ENCODE measurements at regions of chr9 and their contacts with region 1.

Region 1: GRCh38 chr9:88559661-88560060 is 24.7 kb downstream of the NXNL2 start:
- DNase-seq: no peak
- ATAC-seq: no peak
- H3K4me3 ChIP-seq: no peak overlapping the region
- H3K4me3 Mint-ChIP-seq: no peak overlapping the region
- H3K27ac ChIP-seq: no peak overlapping the region
- H3K27ac Mint-ChIP-seq: no peak overlapping the region
- H3K4me1 ChIP-seq: no peaks in the 10 kb centered on the region
- H3K4me1 Mint-ChIP-seq: no peaks in the 10 kb centered on the region
- H3K27me3 ChIP-seq: peaks cover 0 to 12% of the 10 kb centered on the region in 2 experiments
- H3K27me3 Mint-ChIP-seq: peaks cover 3 to 10% of the 10 kb centered on the region in 2 donors

Region 2: DNA sequence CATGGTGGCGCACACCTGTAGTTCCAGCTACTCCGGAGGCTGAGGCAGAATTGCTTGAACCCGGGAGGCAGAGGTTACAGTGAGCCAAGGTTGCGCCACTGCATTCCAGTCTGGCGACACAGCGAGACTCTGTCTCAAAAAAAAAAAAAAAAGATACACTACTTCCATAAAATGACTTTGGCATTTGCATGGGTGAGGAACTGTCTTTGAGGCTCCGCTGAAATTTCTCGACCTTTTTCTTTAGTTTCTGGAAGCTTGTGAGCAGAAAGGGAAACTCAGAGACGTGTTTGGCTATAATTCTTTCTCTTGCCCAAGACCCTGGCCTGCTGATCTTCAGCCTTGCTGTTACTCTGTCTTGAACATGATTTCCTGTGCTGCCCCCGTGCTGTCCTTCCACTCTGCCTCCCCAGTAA is 134.1 kb before region 1 on chr9:
- CTCF ChIA-PET with region 1: no interaction called
- POLR2A ChIA-PET with region 1: no interaction called
- DNase-seq: no peak
- ATAC-seq: no peak
- H3K4me3 ChIP-seq: no peak overlapping the region
- H3K4me3 Mint-ChIP-seq: no peak overlapping the region
- H3K27ac ChIP-seq: no peak overlapping the region
- H3K27ac Mint-ChIP-seq: no peak overlapping the region
- H3K4me1 ChIP-seq: no peaks in the 10 kb centered on the region
- H3K4me1 Mint-ChIP-seq: peaks cover 13 to 27% (median 22%) of the 10 kb centered on the region in 3 donors
- H3K27me3 ChIP-seq: no peaks in the 10 kb centered on the region
- H3K27me3 Mint-ChIP-seq: no peaks in the 10 kb centered on the region

Region 3: GRCh38 chr9:88578121-88579054 is 18.7 kb after region 1 on chr9:
- CTCF ChIA-PET with region 1: no interaction called
- POLR2A ChIA-PET with region 1: interaction called in 1 of 2 experiments, 11 read pairs
- DNase-seq: peak in 33 of 35 experiments; percentile 13 to 72 (median 50)
- ATAC-seq: peak in 3 of 4 experiments; percentile 64 to 68 (median 67)
- H3K4me3 ChIP-seq: no peak overlapping the region
- H3K4me3 Mint-ChIP-seq: peak overlapping the region in 1 of 3 donors; percentile 51
- H3K27ac ChIP-seq: no peak overlapping the region
- H3K27ac Mint-ChIP-seq: no peak overlapping the region
- H3K4me1 ChIP-seq: peaks cover 0 to 8% of the 10 kb centered on the region in 2 experiments
- H3K4me1 Mint-ChIP-seq: peaks cover 1 to 3% (median 3%) of the 10 kb centered on the region in 3 donors
- H3K27me3 ChIP-seq: peaks cover 0 to 38% of the 10 kb centered on the region in 2 experiments
- H3K27me3 Mint-ChIP-seq: peaks cover 8 to 17% of the 10 kb centered on the region in 2 donors

Region 4: DNA sequence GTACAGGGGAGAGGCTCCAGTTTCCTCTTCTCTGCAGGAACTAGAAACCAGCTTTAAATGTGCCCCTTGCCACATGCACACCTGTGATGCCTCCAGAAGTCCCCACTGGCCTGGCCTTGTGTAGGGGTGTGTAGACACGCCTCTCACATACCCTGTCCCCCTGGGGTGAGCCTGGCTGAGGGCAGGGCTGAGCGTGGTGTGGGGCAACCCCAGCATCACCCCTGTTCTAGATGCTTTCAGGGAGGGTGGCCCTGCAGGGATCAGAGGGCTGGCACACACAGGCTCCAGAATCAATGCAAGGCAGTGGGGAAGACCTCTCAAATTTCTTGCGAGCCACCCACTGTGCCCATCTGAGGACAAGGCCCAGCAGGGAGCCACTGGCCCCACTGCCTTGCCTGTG is 30.0 kb after region 1 on chr9:
- CTCF ChIA-PET with region 1: no interaction called
- POLR2A ChIA-PET with region 1: no interaction called
- DNase-seq: no peak
- ATAC-seq: no peak
- H3K4me3 ChIP-seq: no peak overlapping the region
- H3K4me3 Mint-ChIP-seq: no peak overlapping the region
- H3K27ac ChIP-seq: no peak overlapping the region
- H3K27ac Mint-ChIP-seq: no peak overlapping the region
- H3K4me1 ChIP-seq: peaks cover 0 to 2% of the 10 kb centered on the region in 2 experiments
- H3K4me1 Mint-ChIP-seq: peaks cover 4 to 8% (median 4%) of the 10 kb centered on the region in 3 donors
- H3K27me3 ChIP-seq: peaks cover 0 to 7% of the 10 kb centered on the region in 2 experiments
- H3K27me3 Mint-ChIP-seq: peaks cover 0 to 4% of the 10 kb centered on the region in 2 donors

Region 5: GRCh38 chr9:88803546-88804253 is 244.0 kb after region 1 on chr9:
- CTCF ChIA-PET with region 1: no interaction called
- POLR2A ChIA-PET with region 1: no interaction called
- DNase-seq: no peak
- ATAC-seq: no peak
- H3K4me3 ChIP-seq: no peak overlapping the region
- H3K4me3 Mint-ChIP-seq: no peak overlapping the region
- H3K27ac ChIP-seq: no peak overlapping the region
- H3K27ac Mint-ChIP-seq: no peak overlapping the region
- H3K4me1 ChIP-seq: no peaks in the 10 kb centered on the region
- H3K4me1 Mint-ChIP-seq: no peaks in the 10 kb centered on the region
- H3K27me3 ChIP-seq: peaks cover 2 to 11% of the 10 kb centered on the region in 2 experiments
- H3K27me3 Mint-ChIP-seq: peaks cover 27 to 48% of the 10 kb centered on the region in 2 donors